Ascending aorta (tissue), 2 donors: ENCODE measurements at regions of chr17 and their contacts with region 1.

Region 1: DNA sequence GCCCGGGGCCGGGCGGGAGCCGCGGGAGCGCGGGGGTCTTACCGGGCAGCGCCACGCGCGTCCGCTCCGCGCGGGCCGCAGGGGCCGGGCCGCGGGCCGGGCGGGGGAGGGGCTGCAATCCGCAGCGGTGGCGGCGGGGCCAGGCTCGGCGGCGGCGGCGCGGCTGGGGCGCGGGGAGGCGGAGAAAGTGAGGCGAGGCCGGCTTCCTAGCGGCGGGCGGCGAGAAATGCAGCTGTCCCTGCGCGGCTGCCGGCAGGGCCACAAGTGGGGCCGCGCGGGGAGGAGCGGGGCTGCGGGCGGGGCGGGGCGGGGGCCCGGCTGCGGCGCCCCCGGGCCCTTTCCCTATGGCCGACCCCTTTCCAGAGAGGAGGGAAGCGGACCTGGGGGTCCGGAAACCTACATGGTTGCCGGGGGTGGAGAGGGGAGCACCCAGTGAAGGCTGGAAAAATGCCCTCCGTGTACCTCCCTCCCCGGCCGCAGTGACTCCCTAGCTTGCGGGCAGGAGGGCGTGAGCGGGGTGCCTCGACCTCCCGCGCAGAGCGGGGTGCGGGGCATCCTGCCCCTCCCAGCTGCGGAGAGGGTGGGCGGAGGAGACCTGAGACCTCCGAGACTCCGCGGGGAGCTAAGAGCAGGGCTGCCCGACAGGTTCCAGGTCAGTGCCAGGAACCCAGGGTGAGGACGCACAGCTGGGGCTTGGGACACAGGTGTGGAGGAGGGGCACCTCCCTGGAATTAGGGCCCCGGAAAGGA is at the start of gene CUEDC1:
- DNase-seq: peak in 1 of 2 donors; percentile 88
- H3K4me3 ChIP-seq: peak within 1 kb of the TSS; percentile 77 to 92
- H3K27ac ChIP-seq: peak within 1 kb of the TSS; percentile 97 to 98
- H3K4me1 ChIP-seq: peaks cover 3 to 29% of the 10 kb centered on the region in 2 donors
- H3K27me3 ChIP-seq: no peaks in the 10 kb centered on the region
- CTCF ChIP-seq: peak; percentile 20 to 39 (median 38)
- total RNA-seq, gene CUEDC1: 76.1 TPM

Region 2: GRCh38 chr17:57868007-57868909 is 87.1 kb before region 1 on chr17:
- intact Hi-C with region 1: loop called (anchors 2 kb)
- DNase-seq: peak; percentile 70 to 93
- H3K4me3 ChIP-seq: peak overlapping the region in 1 of 2 donors; percentile 40
- H3K27ac ChIP-seq: peak overlapping the region; percentile 83 to 95
- H3K4me1 ChIP-seq: peaks cover 26 to 42% of the 10 kb centered on the region in 2 donors
- H3K27me3 ChIP-seq: no peaks in the 10 kb centered on the region
- CTCF ChIP-seq: peak; percentile 43 to 46 (median 46)

Region 3: DNA sequence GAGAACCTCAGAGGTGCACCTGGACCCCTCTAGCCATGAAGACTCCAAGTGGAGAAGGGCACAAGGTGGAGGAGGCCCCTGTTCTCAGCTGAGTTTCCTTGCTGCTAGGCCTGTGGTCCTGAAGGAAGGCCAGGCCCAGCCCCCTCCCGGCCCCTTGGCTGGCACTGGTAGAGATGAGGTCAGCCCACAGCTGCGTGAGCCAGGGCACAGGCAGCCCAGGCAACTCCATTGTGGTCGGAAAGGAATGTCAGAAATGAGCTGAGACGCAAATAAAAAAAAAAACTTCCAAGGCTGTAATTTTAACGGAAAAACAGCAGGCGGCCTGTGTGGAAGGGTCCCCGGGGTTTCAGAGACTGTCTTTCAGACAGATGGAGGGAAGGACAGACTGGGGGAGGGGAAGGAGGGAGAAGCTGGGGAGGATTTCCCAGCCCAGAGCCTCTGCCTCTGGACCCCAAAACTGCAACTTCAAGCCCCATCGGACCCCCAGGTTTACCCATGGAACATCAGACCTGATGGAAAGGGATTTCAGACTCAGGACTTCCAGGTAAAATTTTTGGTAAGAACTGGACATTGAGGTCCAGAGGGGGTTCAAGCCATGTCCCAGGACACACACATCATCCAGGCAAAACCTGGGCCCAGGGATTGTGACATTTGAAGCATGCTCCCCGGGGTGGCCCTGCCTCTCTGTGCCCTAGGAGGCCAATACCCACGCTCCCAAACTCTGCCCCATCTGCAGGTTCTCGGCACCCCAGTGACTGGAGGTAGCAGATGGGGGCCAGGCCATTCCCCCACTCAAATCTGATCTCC is 79.8 kb before region 1 on chr17:
- intact Hi-C with region 1: loop called (anchors 1 kb)
- DNase-seq: peak; percentile 74 to 96
- H3K4me3 ChIP-seq: peak overlapping the region in 1 of 2 donors; percentile 49
- H3K27ac ChIP-seq: peak overlapping the region; percentile 80 to 85
- H3K4me1 ChIP-seq: peaks cover 33 to 52% of the 10 kb centered on the region in 2 donors
- H3K27me3 ChIP-seq: no peaks in the 10 kb centered on the region
- CTCF ChIP-seq: peak; percentile 43 to 65 (median 63)

Region 4: GRCh38 chr17:57892146-57892828 is 63.1 kb before region 1 on chr17:
- intact Hi-C with region 1: loop called (anchors 1 kb)
- DNase-seq: peak; percentile 70 to 95
- H3K4me3 ChIP-seq: no peak overlapping the region
- H3K27ac ChIP-seq: peak overlapping the region; percentile 88 to 97
- H3K4me1 ChIP-seq: peaks cover 34 to 65% of the 10 kb centered on the region in 2 donors
- H3K27me3 ChIP-seq: no peaks in the 10 kb centered on the region
- CTCF ChIP-seq: peak; percentile 96 to 99 (median 96)

Region 5: GRCh38 chr17:57915985-57916757 is 39.2 kb before region 1 on chr17:
- intact Hi-C with region 1: loop called (anchors 2 kb)
- DNase-seq: no peak
- H3K4me3 ChIP-seq: no peak overlapping the region
- H3K27ac ChIP-seq: peak overlapping the region; percentile 20 to 44
- H3K4me1 ChIP-seq: peaks cover 0 to 51% of the 10 kb centered on the region in 2 donors
- H3K27me3 ChIP-seq: no peaks in the 10 kb centered on the region
- CTCF ChIP-seq: no peak

Region 6: GRCh38 chr17:57987580-57988421 is 32.4 kb after region 1 on chr17 and contains the start of gene VEZF1:
- intact Hi-C with region 1: loop called (anchors 2 kb)
- DNase-seq: peak in 1 of 2 donors; percentile 85
- H3K4me3 ChIP-seq: peak within 1 kb of the TSS; percentile 84 to 85
- H3K27ac ChIP-seq: peak within 1 kb of the TSS; percentile 97 to 98
- H3K4me1 ChIP-seq: peaks cover 0 to 19% of the 10 kb centered on the region in 2 donors
- H3K27me3 ChIP-seq: no peaks in the 10 kb centered on the region
- CTCF ChIP-seq: no peak
- total RNA-seq, gene VEZF1: 47.4 TPM